Mucosa of descending colon (tissue), 3 donors: ENCODE measurements at regions of chr3 and their contacts with region 1.

Region 1: GRCh38 chr3:195914648-195915473 is 6.5 kb upstream of the TNK2 start:
- DNase-seq: peak; percentile 91 to 94 (median 91)
- ATAC-seq: peak; percentile 98
- H3K4me3 ChIP-seq: no peak overlapping the region
- H3K4me1 ChIP-seq: no peaks in the 10 kb centered on the region
- CTCF ChIP-seq: peak; percentile 91

Region 2: GRCh38 chr3:195558602-195559001 is 356.3 kb before region 1 on chr3:
- intact Hi-C with region 1: no loop called
- DNase-seq: peak in 2 of 3 donors; percentile 37 to 70
- ATAC-seq: peak; percentile 95
- H3K4me3 ChIP-seq: no peak overlapping the region
- H3K4me1 ChIP-seq: peaks cover 8% of the 10 kb centered on the region
- CTCF ChIP-seq: peak; percentile 32

Region 3: DNA sequence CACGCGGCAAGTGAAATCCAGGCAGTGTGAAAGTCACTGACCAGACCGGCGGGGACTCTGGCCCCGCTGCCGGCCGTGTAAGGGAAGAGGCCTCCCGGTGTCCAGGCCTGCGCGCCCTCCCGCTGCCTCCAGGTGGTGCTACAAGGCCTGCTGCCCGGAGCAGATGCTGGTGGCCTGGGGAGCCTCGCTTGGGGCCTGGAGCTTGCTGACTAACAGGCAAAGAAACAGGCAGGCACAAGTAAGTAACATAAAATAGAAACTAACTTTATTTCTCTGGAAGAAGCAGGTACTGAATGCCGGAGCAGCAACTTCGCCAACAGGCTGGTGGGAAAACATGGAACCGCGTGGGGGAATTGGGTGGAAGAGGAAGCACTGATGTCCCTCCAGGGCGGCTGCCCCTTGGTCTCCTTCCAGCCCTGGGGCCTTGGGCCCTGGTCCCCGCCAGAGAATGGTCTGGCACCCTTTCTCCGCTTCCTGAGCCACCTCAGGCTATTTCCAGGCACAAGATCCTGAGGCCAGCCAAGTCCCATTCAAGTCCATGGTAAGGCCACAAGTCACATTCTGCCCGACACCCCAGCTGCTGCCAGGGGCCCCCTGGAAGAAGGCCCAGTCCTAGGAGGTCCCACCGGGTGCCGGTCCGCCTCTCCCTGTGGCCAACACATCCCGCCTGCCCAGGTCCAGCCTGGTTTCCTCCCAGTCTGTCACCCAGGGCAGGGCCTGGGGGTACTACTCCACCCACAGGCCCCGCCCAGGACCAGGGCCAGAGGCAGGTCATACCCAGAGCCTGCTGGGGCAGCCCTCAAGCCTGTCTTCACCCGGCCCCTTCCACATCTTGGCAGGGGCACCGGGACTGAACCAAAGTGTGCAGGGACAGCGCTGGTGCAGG is 51.5 kb before region 1 on chr3:
- intact Hi-C with region 1: loop called (anchors 2 to 5 kb)
- DNase-seq: peak; percentile 86 to 93 (median 91)
- ATAC-seq: peak; percentile 97
- H3K4me3 ChIP-seq: no peak overlapping the region
- H3K4me1 ChIP-seq: no peaks in the 10 kb centered on the region
- CTCF ChIP-seq: peak; percentile 90

Region 4: GRCh38 chr3:196207833-196208607 is 293.2 kb after region 1 on chr3:
- intact Hi-C with region 1: no loop called
- DNase-seq: peak; percentile 66 to 85 (median 70)
- ATAC-seq: peak; percentile 89
- H3K4me3 ChIP-seq: no peak overlapping the region
- H3K4me1 ChIP-seq: peaks cover 3% of the 10 kb centered on the region
- CTCF ChIP-seq: no peak